PC-9 (cell line): ENCODE measurements at regions of chr10 and their contacts with region 1.

Region 1: DNA sequence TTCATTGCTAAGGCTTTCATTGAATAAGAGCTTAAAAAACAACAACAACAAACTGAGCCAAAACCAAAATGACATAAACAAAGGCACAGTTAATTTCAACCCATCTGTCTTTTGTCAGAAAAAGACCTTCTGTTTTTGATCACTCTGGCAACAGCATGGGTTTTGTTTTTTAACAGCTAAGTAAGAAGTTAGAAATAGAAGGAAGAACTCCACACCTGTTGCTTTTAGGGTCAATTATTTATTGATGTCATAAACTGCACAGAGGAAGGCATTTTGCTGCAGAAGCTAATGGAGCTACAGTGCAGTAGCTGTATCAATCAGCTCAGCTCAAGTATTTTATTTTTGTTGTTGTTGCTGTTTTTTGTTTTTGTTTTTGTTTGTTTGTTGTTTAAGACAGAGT is 16.3 kb upstream of the GJD4 start:
- DNase-seq: no peak
- H3K4me3 ChIP-seq: no peak overlapping the region
- H3K27ac ChIP-seq: no peak overlapping the region
- H3K4me1 ChIP-seq: no peaks in the 10 kb centered on the region
- H3K27me3 ChIP-seq: no peaks in the 10 kb centered on the region
- CTCF ChIP-seq: no peak

Region 2: DNA sequence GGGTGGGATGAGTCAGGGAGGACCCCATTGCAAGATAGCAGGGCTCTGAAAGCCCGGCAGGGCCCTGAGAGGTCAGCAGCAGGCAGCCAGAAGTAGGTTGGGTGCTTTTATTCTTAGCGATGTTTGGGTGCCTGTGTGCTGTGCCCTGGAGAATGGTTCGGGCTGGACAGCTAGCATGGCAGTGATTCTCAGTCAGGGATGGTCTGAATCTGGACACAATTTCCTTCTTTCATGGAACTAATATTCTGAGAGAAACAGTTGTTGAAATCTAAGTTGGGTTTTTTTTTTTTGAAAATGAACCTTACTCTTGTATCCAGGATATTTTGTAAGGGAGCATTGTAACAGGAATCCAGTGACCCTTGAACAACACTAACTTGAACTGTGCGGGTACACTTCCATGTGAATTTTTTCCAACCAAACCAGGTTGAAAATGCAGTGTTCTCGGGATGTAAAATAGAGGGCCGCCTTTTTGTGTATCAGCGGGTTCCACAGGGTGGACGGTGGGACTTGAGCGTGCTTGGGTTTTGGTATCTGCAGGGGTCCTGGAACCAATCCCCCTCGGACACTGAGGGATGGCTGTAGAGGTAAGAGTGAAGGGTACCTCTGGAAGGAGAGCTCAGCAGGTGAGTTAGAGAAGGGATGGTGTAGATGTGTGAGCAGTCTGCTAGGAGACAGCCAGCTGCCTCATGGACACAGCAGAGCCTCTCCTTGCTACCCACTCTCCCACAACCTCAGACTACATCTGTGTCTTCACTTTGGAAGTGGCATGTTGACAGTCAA is 240.0 kb before region 1 on chr10:
- CTCF ChIA-PET with region 1: no interaction called
- POLR2A ChIA-PET with region 1: interaction called, 16 read pairs
- intact Hi-C with region 1: no loop called
- DNase-seq: no peak
- H3K4me3 ChIP-seq: no peak overlapping the region
- H3K27ac ChIP-seq: no peak overlapping the region
- H3K4me1 ChIP-seq: no peaks in the 10 kb centered on the region
- H3K27me3 ChIP-seq: no peaks in the 10 kb centered on the region
- CTCF ChIP-seq: no peak